ENCODE measurements at regions of chr7 and their contacts with region 1.

Region 1: DNA sequence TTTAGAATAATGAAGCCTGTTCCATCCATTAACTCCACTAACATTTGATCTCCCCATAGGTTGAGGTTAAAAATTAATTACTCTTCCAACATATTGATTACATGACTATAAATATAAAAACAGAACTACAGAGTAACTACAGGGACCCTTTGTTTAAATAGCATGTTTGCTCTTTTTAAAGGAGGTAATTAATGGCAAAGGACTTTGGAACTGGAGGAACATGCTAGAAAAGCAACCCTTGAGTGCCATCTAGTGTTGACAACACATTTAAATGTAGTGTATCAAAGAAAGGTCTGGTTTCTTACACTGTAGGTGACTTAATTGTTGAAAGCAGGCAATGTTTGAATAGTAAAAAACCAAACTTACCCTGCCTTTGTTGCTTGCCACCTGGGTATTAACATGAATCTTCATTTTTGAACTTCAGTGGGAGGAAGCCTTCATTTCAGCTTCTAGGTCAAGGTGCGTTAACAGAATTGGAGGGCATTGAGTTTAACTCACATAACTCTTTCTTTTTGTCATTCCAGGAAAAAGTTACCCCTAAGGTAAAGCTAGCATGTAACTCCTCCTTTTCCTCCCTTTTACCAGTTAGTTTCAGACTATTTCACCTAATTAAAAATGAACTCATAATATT is 52.6 kb upstream of the CAPZA2 start:
- DNase-seq: peak; percentile 49
- CTCF ChIP-seq: peak; percentile 57

Region 2: GRCh38 chr7:116173051-116174028 is 636.4 kb before region 1 on chr7:
- in situ Hi-C with region 1: loop called (anchors 25 kb)
- DNase-seq: peak; percentile 24
- CTCF ChIP-seq: peak; percentile 49

Region 3: GRCh38 chr7:116259871-116260440 is 549.8 kb before region 1 on chr7:
- in situ Hi-C with region 1: loop called (anchors 10 kb)
- DNase-seq: no peak
- CTCF ChIP-seq: no peak